ENCODE measurements at regions of chr4 and their contacts with region 1.

Region 1: DNA sequence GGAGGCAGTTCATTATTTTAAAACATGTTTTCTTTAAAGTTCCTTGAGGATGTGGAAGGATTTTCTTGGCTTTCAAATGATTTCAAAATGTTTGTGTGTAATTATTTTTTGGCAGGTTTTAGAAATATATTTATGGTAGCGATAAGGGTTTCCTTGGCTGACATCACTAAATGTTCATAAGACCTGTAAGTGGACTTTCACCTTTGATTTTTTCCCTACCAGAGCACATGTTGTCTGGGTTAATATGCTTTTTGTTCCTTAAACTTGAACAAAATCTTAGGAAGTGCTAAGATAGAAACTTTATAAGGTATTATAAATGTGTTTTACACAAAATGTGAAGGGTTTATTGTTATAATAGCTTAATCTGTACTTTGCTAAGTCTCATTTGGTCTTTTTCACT is 315.6 kb downstream of the PCDH7 start:
- DNase-seq: no peak
- H3K4me3 ChIP-seq: no peak overlapping the region
- H3K27ac ChIP-seq: no peak overlapping the region
- H3K4me1 ChIP-seq: peaks cover 0 to 8% (median 5%) of the 10 kb centered on the region in 4 experiments; a peak in 6 of 7 replicates
- H3K27me3 ChIP-seq: no peaks in the 10 kb centered on the region
- CTCF ChIP-seq: no peak
- EP300 ChIP-seq: no peak
- POLR2A ChIP-seq: no peak
- RAD21 ChIP-seq: no peak

Region 2: GRCh38 chr4:31007858-31008257 is 27.9 kb before region 1 on chr4:
- CTCF ChIA-PET with region 1: no interaction called
- POLR2A ChIA-PET with region 1: no interaction called
- DNase-seq: no peak
- H3K4me3 ChIP-seq: no peak overlapping the region
- H3K27ac ChIP-seq: no peak overlapping the region
- H3K4me1 ChIP-seq: no peaks in the 10 kb centered on the region
- H3K27me3 ChIP-seq: no peaks in the 10 kb centered on the region
- CTCF ChIP-seq: no peak
- EP300 ChIP-seq: no peak
- POLR2A ChIP-seq: no peak
- RAD21 ChIP-seq: no peak

Region 3: DNA sequence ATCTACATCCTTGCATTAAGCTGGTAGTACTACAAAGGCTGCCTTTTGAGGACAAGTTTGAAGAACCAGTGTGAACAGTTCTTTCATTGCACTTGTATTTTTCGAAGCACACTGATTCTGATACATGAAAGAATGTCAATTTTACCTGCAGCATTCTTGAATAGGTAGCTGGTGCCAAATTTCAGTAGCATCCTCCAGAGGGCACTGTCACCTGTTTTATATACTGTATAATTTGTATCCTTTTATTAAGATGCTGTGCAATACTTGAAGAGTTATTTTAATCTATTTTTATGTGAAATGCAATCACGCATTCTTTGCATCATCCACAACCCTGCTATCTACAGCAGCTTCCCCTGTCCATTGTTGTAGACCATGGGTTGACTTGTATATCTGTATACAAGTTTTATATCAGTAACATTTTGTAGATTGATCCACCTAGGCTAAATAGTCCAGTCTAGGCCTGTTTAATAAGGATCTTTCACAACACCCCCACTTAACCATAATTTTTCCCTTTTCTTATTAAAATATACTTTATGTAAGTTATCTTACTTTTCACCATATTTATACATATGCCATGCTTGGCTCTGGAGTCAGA is 10.1 kb after region 1 on chr4:
- CTCF ChIA-PET with region 1: interaction called, 10 read pairs
- POLR2A ChIA-PET with region 1: no interaction called
- DNase-seq: no peak
- H3K4me3 ChIP-seq: no peak overlapping the region
- H3K27ac ChIP-seq: no peak overlapping the region
- H3K4me1 ChIP-seq: peaks cover 0 to 28% (median 1%) of the 10 kb centered on the region in 4 experiments; a peak in 2 of 7 replicates
- H3K27me3 ChIP-seq: no peaks in the 10 kb centered on the region
- CTCF ChIP-seq: peak in 2 of 3 experiments; percentile 33 to 60; a peak in 2 of 4 replicates
- EP300 ChIP-seq: no peak
- POLR2A ChIP-seq: no peak
- RAD21 ChIP-seq: peak; percentile 54 to 56